Dorsolateral prefrontal cortex (tissue), 120 donors: ENCODE measurements at regions of chr1 and their contacts with region 1.

Region 1: GRCh38 chr1:194369060-194369459 is 1182.6 kb upstream of the B3GALT2 start:
- DNase-seq: no peak
- H3K4me3 ChIP-seq: no peak overlapping the region
- H3K27ac ChIP-seq: no peak overlapping the region
- H3K27me3 ChIP-seq: no peaks in the 10 kb centered on the region
- CTCF ChIP-seq: no peak

Region 2: DNA sequence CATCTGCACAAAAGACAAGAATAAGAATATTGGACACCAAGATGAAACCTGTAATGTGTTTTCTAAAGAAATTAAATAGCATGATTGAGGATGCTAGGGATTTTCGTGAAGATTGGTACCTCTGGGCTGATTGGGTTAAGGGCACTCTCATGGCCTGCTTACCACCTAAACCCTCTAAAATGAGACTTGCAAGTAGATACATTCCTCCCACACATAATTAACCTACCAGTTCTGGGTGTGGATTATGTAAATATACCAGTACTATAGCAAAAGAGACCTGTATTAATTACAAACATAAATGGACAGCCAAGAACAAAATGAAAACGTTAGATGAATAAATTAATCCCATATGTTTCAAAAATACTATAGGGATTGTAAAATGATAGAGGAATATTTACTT is 113.0 kb before region 1 on chr1:
- intact Hi-C with region 1: no loop called
- DNase-seq: no peak
- H3K4me3 ChIP-seq: no peak overlapping the region
- H3K27ac ChIP-seq: no peak overlapping the region
- H3K27me3 ChIP-seq: no peaks in the 10 kb centered on the region
- CTCF ChIP-seq: no peak

Region 3: DNA sequence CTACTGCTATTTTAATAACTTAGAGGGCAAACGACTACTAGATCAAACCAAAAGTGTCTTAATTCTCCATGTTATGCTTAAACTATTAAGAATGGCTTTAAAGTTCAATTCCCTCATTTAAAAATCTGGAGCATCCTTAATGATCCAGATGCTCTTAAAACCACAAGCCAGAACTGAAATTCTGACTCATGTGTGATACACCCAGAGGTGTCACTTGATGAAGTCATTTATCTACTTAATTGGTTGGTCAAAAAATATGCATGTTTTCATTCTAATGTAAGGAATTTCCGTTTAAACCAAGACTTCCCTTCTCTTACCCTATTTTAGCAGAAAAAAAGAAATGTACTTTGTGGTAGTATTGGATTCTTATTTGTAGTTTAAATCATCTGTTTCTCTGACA is 78.6 kb after region 1 on chr1:
- intact Hi-C with region 1: loop called in 1 of 2 experiments (anchors 5 kb)
- DNase-seq: no peak
- H3K4me3 ChIP-seq: no peak overlapping the region
- H3K27ac ChIP-seq: no peak overlapping the region
- H3K27me3 ChIP-seq: no peaks in the 10 kb centered on the region
- CTCF ChIP-seq: no peak